ENCODE measurements at regions of chr6 and their contacts with region 1.

Region 1: DNA sequence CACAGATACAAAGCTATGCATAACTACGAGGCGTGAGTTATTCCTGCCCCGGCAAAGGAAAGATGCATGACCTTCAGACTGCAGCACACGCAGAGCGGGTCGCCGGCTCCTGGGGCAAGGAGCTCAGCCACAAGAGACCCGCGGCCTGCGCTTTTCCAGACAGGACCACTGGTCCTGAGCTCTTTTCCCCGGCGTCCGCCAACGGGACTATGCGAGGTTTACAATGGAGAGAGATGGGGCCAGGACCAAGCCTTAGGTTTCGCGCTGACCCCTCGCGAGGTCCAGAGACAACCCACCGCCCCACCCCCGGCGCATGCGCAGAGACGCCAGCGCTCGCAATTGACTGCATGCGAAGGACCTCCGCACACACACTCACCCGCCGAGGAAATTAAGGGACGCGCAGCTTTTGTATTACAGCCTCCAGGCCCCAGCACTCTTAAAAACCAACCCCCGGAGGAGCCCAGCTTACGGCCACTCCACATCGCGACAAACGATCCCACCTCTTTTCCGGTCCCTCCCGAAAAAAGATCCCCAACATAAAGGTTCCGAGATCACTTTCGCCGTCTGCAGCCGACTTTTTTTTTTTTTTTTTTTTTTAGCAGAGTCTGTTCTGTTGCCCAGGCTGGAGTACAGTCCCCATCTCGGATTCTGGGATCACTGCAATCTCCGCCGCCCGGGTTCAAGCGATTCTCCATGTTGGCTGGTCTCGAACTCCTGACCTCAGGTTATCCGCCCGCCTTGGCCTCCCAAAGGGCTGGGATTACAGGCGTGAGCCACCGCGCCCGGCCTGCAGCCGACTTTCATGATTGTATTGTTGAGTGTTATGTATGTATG is at the start of gene COQ3:
- DNase-seq: peak; percentile 42
- ATAC-seq: peak; percentile 94
- H3K4me3 ChIP-seq: peak within 1 kb of the TSS; percentile 83 to 85
- H3K27ac ChIP-seq: peak within 1 kb of the TSS; percentile 92
- H3K4me1 ChIP-seq: no peaks in the 10 kb centered on the region
- H3K27me3 ChIP-seq: no peaks in the 10 kb centered on the region
- CTCF ChIP-seq: no peak
- total RNA-seq, gene COQ3: 9.5 TPM

Region 2: GRCh38 chr6:99330159-99330558 is 63.8 kb before region 1 on chr6:
- CTCF ChIA-PET with region 1: no interaction called
- POLR2A ChIA-PET with region 1: no interaction called
- in situ Hi-C with region 1: no loop called
- intact Hi-C with region 1: loop called (anchors 5 kb)
- DNase-seq: peak; percentile 22
- ATAC-seq: peak; percentile 85
- H3K4me3 ChIP-seq: no peak overlapping the region
- H3K27ac ChIP-seq: no peak overlapping the region
- H3K4me1 ChIP-seq: no peaks in the 10 kb centered on the region
- H3K27me3 ChIP-seq: no peaks in the 10 kb centered on the region
- CTCF ChIP-seq: peak; percentile 88

Region 3: GRCh38 chr6:99434702-99435530 is 41.0 kb after region 1 on chr6:
- CTCF ChIA-PET with region 1: no interaction called
- POLR2A ChIA-PET with region 1: no interaction called
- in situ Hi-C with region 1: no loop called
- intact Hi-C with region 1: no loop called
- DNase-seq: no peak
- ATAC-seq: peak; percentile 70; the same call in 1 of the 2 replicates
- H3K4me3 ChIP-seq: no peak overlapping the region
- H3K27ac ChIP-seq: no peak overlapping the region
- H3K4me1 ChIP-seq: peaks cover 10% of the 10 kb centered on the region; the same call in 1 of the 2 replicates
- H3K27me3 ChIP-seq: no peaks in the 10 kb centered on the region
- CTCF ChIP-seq: peak; percentile 61; the same call in 1 of the 2 replicates

Region 4: DNA sequence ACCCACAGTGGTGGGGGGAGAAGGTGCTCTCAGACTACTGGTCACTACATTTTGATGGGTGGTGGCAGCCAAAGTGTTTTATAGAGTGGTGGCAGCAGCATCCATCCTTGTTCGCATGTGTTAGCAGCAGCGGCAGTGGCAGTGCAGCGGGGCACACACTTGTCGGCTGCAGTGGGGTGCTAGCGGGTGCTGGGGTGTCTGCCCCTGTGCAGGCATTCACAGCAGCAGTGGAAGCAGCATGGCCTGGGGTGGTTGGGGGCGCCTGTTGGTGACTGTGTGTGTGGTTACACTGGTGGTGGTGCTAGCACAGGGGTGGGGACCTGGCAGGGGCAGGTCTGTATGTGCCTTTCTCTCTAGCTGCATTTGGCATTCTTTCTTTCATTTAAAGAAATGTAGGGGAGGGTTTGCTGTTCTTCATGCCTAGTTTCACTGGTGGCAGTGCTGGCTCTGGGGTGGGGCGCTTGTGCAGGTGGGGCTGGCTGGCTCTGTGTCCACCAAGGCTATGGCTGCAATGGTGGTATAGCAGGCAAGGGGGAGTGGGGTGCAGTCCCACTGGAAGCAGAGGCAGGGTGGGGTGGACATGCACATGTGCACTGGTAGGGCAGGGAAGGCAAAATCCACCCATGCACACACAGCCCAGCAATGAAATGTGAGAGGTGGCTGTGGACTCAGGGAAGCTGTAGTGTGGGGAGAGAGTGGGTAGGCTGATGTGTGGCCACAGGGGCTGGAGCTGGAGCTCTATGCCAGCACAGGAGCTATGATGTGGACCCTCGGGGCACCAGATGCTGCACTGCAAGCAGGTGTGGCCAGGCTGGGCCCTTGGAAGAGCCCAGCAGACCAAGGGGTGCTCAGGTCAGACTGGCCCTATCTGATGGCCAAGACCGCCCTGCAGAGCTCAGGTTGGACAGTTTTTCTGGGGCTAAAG is 386.0 kb after region 1 on chr6:
- CTCF ChIA-PET with region 1: no interaction called
- POLR2A ChIA-PET with region 1: no interaction called
- in situ Hi-C with region 1: no loop called
- intact Hi-C with region 1: no loop called
- DNase-seq: no peak
- ATAC-seq: no peak; the same call in 1 of the 2 replicates
- H3K4me3 ChIP-seq: no peak overlapping the region
- H3K27ac ChIP-seq: no peak overlapping the region
- H3K4me1 ChIP-seq: no peaks in the 10 kb centered on the region
- H3K27me3 ChIP-seq: peaks cover 3% of the 10 kb centered on the region; the same call in 1 of the 2 replicates
- CTCF ChIP-seq: no peak

Region 5: GRCh38 chr6:100460650-100461204 is 1066.8 kb after region 1 on chr6:
- CTCF ChIA-PET with region 1: interaction called, 13 read pairs
- POLR2A ChIA-PET with region 1: no interaction called
- in situ Hi-C with region 1: no loop called
- intact Hi-C with region 1: no loop called
- DNase-seq: no peak
- ATAC-seq: peak; percentile 75
- H3K4me3 ChIP-seq: peak overlapping the region; percentile 46 to 73
- H3K27ac ChIP-seq: no peak overlapping the region
- H3K4me1 ChIP-seq: peaks cover 6% of the 10 kb centered on the region
- H3K27me3 ChIP-seq: peaks cover 7% of the 10 kb centered on the region; the same call in 1 of the 2 replicates
- CTCF ChIP-seq: peak; percentile 72

Region 6: DNA sequence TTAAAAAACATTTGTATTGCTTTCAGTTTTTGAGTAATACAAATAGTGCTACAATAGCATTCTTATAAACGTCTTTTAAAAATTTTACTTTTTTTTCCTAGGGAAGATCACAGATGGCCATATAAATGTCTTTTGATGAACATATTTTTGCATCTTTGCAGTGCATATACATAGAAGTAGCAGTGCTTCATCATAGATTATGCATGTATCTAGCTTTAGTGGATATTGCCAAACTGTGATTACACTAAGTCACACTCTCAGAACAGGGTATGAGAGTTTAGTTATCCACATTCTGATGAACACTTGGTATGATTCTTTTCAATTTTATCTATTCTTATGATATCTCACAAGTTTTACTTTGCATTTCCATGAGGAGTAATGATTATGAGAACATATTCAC is 1587.0 kb after region 1 on chr6:
- CTCF ChIA-PET with region 1: no interaction called
- POLR2A ChIA-PET with region 1: interaction called, 10 read pairs
- in situ Hi-C with region 1: no loop called
- intact Hi-C with region 1: no loop called
- DNase-seq: no peak
- ATAC-seq: no peak
- H3K4me3 ChIP-seq: no peak overlapping the region
- H3K27ac ChIP-seq: no peak overlapping the region
- H3K4me1 ChIP-seq: no peaks in the 10 kb centered on the region
- H3K27me3 ChIP-seq: no peaks in the 10 kb centered on the region
- CTCF ChIP-seq: no peak

Measured in Panc1 (cell line).